Panc1 (cell line): ENCODE measurements at regions of chr14 and their contacts with region 1.

Region 1: DNA sequence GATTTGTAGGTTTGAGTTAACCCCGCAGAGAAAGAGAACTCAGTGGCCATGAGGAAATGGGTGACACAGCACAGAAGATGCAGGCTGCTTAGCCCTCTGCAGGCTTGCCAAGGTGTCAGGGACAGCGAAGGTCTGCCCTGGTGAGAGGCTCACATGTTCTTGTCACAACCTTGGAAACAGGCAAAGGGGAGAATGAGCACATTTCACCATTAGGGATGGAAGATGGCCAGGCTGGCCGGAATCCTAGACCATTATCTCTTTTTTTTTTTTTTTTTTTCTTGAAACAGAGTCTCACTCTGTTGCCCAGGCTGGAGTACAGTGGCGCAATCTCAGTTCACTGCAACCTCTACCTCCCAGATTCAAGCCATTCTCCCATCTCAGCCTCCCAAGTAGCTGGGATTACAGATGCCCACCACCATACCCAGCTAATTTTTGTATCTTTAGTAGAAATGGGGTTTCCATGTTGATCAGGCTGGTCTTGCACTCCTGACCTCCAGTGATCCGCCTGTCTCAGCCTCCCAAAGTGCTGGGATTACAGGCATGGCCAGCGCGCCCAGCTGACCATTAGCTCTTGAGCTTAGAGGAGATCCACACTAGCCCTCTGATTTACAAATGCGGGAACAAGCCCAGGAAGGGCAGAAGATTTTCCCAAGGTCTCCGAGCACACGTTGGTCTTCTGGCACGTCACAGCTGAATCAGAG is 34.6 kb downstream of the LTBP2 start:
- DNase-seq: no peak
- ATAC-seq: no peak
- H3K4me3 ChIP-seq: no peak overlapping the region
- H3K27ac ChIP-seq: no peak overlapping the region
- H3K4me1 ChIP-seq: peaks cover 19% of the 10 kb centered on the region
- H3K27me3 ChIP-seq: no peaks in the 10 kb centered on the region
- CTCF ChIP-seq: no peak

Region 2: GRCh38 chr14:74257078-74257989 is 320.1 kb before region 1 on chr14:
- CTCF ChIA-PET with region 1: no interaction called
- POLR2A ChIA-PET with region 1: no interaction called
- in situ Hi-C with region 1: no loop called
- intact Hi-C with region 1: no loop called
- DNase-seq: no peak
- ATAC-seq: peak; percentile 84
- H3K4me3 ChIP-seq: peak overlapping the region; percentile 41 to 59
- H3K27ac ChIP-seq: no peak overlapping the region
- H3K4me1 ChIP-seq: no peaks in the 10 kb centered on the region
- H3K27me3 ChIP-seq: no peaks in the 10 kb centered on the region
- CTCF ChIP-seq: peak; percentile 97

Region 3: GRCh38 chr14:74593241-74593953 is 16.0 kb after region 1 on chr14:
- CTCF ChIA-PET with region 1: no interaction called
- POLR2A ChIA-PET with region 1: no interaction called
- in situ Hi-C with region 1: no loop called
- intact Hi-C with region 1: no loop called
- DNase-seq: no peak
- ATAC-seq: no peak
- H3K4me3 ChIP-seq: no peak overlapping the region
- H3K27ac ChIP-seq: no peak overlapping the region
- H3K4me1 ChIP-seq: no peaks in the 10 kb centered on the region
- H3K27me3 ChIP-seq: no peaks in the 10 kb centered on the region
- CTCF ChIP-seq: no peak

Region 4: DNA sequence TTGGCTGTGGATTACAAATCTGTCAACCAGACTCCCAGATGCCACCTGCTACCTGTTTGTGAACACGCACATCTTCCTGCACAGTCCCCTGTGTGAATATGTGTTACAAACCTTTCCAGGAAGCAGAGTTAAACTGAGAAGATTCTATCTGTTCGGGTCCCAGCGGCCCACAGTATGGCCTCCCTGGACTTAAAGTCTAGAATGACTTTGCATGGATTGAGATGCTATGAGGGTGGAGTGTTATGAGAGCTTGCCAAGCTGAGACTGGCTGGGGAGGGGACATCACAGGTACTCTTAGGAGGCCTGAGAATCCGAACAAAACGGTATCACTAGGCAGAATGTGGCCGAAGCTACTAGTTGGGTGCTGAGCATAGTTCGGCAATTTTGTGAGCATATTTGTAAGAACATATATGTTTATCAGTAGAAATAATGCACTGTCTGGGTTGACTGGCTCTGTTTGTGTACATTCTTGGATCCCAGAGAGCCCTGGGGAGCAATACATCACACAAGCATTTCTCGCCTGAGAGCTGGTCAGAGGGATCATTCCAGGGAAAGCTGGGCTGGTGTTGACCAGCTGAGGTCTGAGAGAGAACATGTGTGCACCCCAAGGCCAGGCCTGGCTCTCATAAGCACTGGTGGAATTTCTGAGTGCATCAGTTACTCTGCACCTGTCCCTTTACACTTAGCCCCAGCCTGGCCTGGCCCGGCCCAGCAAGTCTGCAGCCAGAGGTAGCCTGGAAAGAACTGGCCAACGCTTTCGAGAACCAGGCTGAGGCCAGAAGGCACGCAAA is 64.4 kb after region 1 on chr14:
- CTCF ChIA-PET with region 1: no interaction called
- POLR2A ChIA-PET with region 1: no interaction called
- in situ Hi-C with region 1: no loop called
- intact Hi-C with region 1: no loop called
- DNase-seq: no peak
- ATAC-seq: peak; percentile 13; the same call in 1 of the 2 replicates
- H3K4me3 ChIP-seq: no peak overlapping the region
- H3K27ac ChIP-seq: no peak overlapping the region
- H3K4me1 ChIP-seq: no peaks in the 10 kb centered on the region
- H3K27me3 ChIP-seq: no peaks in the 10 kb centered on the region
- CTCF ChIP-seq: no peak

Region 5: DNA sequence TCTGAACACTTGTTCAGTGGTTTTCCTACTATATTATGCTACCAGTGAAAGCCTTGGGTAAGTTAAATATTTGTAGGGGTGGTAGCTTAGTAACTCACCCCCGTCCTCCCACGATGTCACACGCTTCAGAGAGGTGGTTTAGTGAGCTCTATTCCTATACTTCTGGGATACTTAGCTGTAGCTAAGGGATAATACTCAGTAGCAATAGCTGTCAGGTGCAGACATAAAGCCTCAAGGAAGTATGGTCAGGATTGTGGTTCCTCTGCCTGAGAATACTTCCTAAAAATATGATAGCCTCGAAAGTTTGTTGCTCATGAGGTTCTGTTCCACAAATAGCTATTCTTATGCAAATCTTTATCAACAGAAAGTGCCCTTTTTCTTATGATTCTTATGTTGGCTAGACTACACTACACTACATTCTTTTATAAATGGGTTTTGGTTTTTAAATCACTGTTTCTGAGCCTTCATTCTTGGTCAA is 316.3 kb after region 1 on chr14:
- CTCF ChIA-PET with region 1: no interaction called
- POLR2A ChIA-PET with region 1: no interaction called
- in situ Hi-C with region 1: no loop called
- intact Hi-C with region 1: no loop called
- DNase-seq: no peak
- ATAC-seq: no peak
- H3K4me3 ChIP-seq: no peak overlapping the region
- H3K27ac ChIP-seq: no peak overlapping the region
- H3K4me1 ChIP-seq: no peaks in the 10 kb centered on the region
- H3K27me3 ChIP-seq: no peaks in the 10 kb centered on the region
- CTCF ChIP-seq: no peak

Region 6: DNA sequence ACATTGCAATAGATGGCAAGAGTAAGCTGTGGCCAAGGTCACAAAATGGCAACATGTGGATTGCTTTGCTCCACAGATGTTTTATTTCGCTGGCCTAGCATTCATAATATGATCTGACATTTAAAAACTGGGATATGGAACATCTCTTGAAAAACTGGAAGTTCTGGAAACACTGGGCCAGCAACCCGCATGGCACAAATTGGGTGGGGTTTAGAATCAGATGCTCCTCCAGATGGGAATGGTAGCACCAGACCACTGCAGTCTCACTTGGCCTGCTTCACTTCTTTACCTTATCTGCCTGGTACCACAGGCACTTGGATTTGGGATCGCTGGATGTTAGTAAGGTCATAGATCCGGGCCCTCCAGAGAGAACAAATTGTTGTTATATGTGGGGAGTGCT is 502.1 kb after region 1 on chr14:
- CTCF ChIA-PET with region 1: no interaction called
- POLR2A ChIA-PET with region 1: interaction called, 14 read pairs
- in situ Hi-C with region 1: no loop called
- intact Hi-C with region 1: no loop called
- DNase-seq: no peak
- ATAC-seq: no peak
- H3K4me3 ChIP-seq: no peak overlapping the region
- H3K27ac ChIP-seq: no peak overlapping the region
- H3K4me1 ChIP-seq: no peaks in the 10 kb centered on the region
- H3K27me3 ChIP-seq: no peaks in the 10 kb centered on the region
- CTCF ChIP-seq: no peak